ENCODE measurements at regions of chr6 and their contacts with region 1.

Region 1: DNA sequence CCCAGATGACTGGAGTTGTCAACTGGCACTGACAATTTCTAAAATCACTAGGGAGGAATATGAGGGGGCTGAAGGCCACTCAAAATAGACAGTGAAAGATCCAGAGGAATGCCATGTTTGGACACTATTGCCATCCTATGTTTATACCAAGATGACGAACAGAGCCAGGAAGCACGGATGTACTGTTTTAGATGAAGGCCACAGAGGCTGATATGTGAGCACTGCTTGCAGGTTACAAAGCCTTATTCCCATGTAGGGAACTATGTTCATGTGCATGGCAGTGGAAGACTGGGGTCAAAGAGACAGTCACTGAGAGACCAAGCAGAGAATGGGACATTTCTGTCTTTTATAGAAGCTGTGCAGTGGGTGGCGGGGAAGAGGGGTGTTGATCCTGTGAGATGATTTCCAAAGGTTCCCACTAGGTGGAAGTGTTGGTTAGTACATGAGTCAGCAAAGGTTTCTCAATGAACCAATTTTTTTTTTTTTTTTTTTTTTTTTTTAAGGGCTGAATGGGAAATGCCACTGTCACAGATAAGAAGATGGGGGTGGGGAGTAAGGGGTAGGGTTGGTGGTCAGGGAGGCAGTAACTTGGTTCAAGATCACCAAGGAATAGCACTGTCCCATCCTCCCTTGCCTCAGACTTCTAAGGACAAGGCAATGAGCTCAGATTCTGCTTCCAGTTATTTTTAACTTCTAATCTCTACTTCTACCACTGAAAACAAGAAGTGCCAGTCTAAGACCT is 46.7 kb upstream of the MOCS1 start:
- DNase-seq: peak; percentile 57
- ATAC-seq: peak; percentile 89
- H3K4me3 ChIP-seq: no peak overlapping the region
- H3K27ac ChIP-seq: no peak overlapping the region
- H3K4me1 ChIP-seq: peaks cover 5% of the 10 kb centered on the region
- H3K27me3 ChIP-seq: 0 out of 2 replicates have a peak, but pooled peaks cover 2% of the 10 kb centered on the region
- CTCF ChIP-seq: peak; percentile 66
- POLR2A ChIP-seq: no peak
- RAD21 ChIP-seq: peak; percentile 67

Region 2: GRCh38 chr6:39361657-39362486 is 619.1 kb before region 1 on chr6:
- CTCF ChIA-PET with region 1: no interaction called
- POLR2A ChIA-PET with region 1: no interaction called
- dilution Hi-C with region 1: no loop called
- in situ Hi-C with region 1: no loop called
- intact Hi-C with region 1: loop called (anchors 1 kb)
- DNase-seq: peak; percentile 58
- ATAC-seq: peak; percentile 98
- H3K4me3 ChIP-seq: no peak overlapping the region
- H3K27ac ChIP-seq: no peak overlapping the region
- H3K4me1 ChIP-seq: no peaks in the 10 kb centered on the region; the same call in 1 of the 2 replicates
- H3K27me3 ChIP-seq: no peaks in the 10 kb centered on the region
- CTCF ChIP-seq: peak; percentile 75
- POLR2A ChIP-seq: no peak
- RAD21 ChIP-seq: peak; percentile 87

Region 3: GRCh38 chr6:39496915-39497314 is 484.1 kb before region 1 on chr6:
- CTCF ChIA-PET with region 1: no interaction called
- POLR2A ChIA-PET with region 1: no interaction called
- dilution Hi-C with region 1: no loop called
- in situ Hi-C with region 1: no loop called
- intact Hi-C with region 1: no loop called
- DNase-seq: no peak
- ATAC-seq: no peak
- H3K4me3 ChIP-seq: no peak overlapping the region
- H3K27ac ChIP-seq: no peak overlapping the region
- H3K4me1 ChIP-seq: no peaks in the 10 kb centered on the region
- H3K27me3 ChIP-seq: no peaks in the 10 kb centered on the region
- CTCF ChIP-seq: no peak
- POLR2A ChIP-seq: no peak
- RAD21 ChIP-seq: no peak

Region 4: GRCh38 chr6:39934131-39934757 is 46.8 kb before region 1 on chr6 and contains the start of gene MOCS1:
- CTCF ChIA-PET with region 1: no interaction called
- POLR2A ChIA-PET with region 1: no interaction called
- dilution Hi-C with region 1: no loop called
- in situ Hi-C with region 1: no loop called
- intact Hi-C with region 1: loop called (anchors 2 kb)
- DNase-seq: peak; percentile 47
- ATAC-seq: peak; percentile 98
- H3K4me3 ChIP-seq: peak within 1 kb of the TSS; percentile 74
- H3K27ac ChIP-seq: peak within 1 kb of the TSS; percentile 27
- H3K4me1 ChIP-seq: peaks cover 23% of the 10 kb centered on the region
- H3K27me3 ChIP-seq: peaks cover 2% of the 10 kb centered on the region; the same call in 1 of the 2 replicates
- CTCF ChIP-seq: no peak
- POLR2A ChIP-seq: no peak
- RAD21 ChIP-seq: no peak
- total RNA-seq, gene MOCS1: 8.1 and 9.5 TPM in 2 replicates

Region 5: GRCh38 chr6:40845553-40845952 is 864.5 kb after region 1 on chr6:
- CTCF ChIA-PET with region 1: no interaction called
- POLR2A ChIA-PET with region 1: no interaction called
- dilution Hi-C with region 1: no loop called
- in situ Hi-C with region 1: no loop called
- intact Hi-C with region 1: loop called (anchors 1 kb)
- DNase-seq: peak; percentile 37
- ATAC-seq: peak; percentile 42; the same call in 1 of the 2 replicates
- H3K4me3 ChIP-seq: no peak overlapping the region
- H3K27ac ChIP-seq: no peak overlapping the region
- H3K4me1 ChIP-seq: no peaks in the 10 kb centered on the region
- H3K27me3 ChIP-seq: peaks cover 10% of the 10 kb centered on the region; the same call in 1 of the 2 replicates
- CTCF ChIP-seq: peak; percentile 53
- POLR2A ChIP-seq: no peak
- RAD21 ChIP-seq: peak; percentile 51

Region 6: DNA sequence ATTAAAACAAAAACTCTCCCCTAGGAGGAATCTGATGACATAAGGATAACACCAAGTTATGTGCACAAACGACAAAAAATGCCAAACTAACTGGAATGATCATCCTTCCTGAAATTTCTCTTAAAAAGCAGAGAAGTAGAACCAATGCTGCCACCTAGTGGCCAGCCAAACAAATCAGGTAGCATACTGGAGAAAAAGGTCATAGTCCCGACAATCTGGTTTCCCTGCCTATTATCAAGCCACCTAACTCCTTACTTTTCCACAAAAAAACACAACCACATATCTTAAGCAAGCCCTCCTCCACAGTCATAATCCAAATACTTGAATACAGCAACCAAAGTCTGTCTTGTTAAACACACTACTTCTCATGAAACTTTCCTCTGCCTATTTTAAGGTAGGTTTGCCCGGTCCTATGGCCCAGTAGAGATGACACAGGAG is 1085.9 kb after region 1 on chr6:
- CTCF ChIA-PET with region 1: no interaction called
- POLR2A ChIA-PET with region 1: no interaction called
- dilution Hi-C with region 1: no loop called
- in situ Hi-C with region 1: no loop called
- intact Hi-C with region 1: loop called (anchors 2 kb)
- DNase-seq: peak; percentile 84
- ATAC-seq: peak; percentile 40; the same call in 1 of the 2 replicates
- H3K4me3 ChIP-seq: no peak overlapping the region
- H3K27ac ChIP-seq: no peak overlapping the region
- H3K4me1 ChIP-seq: no peaks in the 10 kb centered on the region
- H3K27me3 ChIP-seq: no peaks in the 10 kb centered on the region
- CTCF ChIP-seq: peak; percentile 79
- POLR2A ChIP-seq: no peak
- RAD21 ChIP-seq: peak; percentile 78